ENCODE measurements at regions of chr11 and their contacts with region 1.

Region 1: GRCh38 chr11:9003573-9004309 is at the start of gene NRIP3:
- DNase-seq: peak; percentile 67
- H3K4me3 Mint-ChIP-seq: peak within 1 kb of the TSS; percentile 68
- H3K27ac Mint-ChIP-seq: no peak within 1 kb of the TSS
- H3K4me1 Mint-ChIP-seq: peaks cover 24% of the 10 kb centered on the region
- H3K27me3 Mint-ChIP-seq: peaks cover 33% of the 10 kb centered on the region
- total RNA-seq, gene NRIP3: 3.0 to 3.5 TPM

Region 2: GRCh38 chr11:8682303-8683114 is 321.2 kb before region 1 on chr11 and contains the starts of genes RPL27A and TRIM66:
- CTCF ChIA-PET with region 1: no interaction called
- intact Hi-C with region 1: loop called (anchors 2 kb)
- DNase-seq: peak; percentile 99
- H3K4me3 Mint-ChIP-seq: peak within 1 kb of the TSS; percentile 91
- H3K27ac Mint-ChIP-seq: peak within 1 kb of the TSS; percentile 92
- H3K4me1 Mint-ChIP-seq: peaks cover 42% of the 10 kb centered on the region
- H3K27me3 Mint-ChIP-seq: no peaks in the 10 kb centered on the region
- total RNA-seq, gene RPL27A: 1,157 to 1,188 TPM
- total RNA-seq, gene TRIM66: 16.4 to 19.1 TPM

Region 3: DNA sequence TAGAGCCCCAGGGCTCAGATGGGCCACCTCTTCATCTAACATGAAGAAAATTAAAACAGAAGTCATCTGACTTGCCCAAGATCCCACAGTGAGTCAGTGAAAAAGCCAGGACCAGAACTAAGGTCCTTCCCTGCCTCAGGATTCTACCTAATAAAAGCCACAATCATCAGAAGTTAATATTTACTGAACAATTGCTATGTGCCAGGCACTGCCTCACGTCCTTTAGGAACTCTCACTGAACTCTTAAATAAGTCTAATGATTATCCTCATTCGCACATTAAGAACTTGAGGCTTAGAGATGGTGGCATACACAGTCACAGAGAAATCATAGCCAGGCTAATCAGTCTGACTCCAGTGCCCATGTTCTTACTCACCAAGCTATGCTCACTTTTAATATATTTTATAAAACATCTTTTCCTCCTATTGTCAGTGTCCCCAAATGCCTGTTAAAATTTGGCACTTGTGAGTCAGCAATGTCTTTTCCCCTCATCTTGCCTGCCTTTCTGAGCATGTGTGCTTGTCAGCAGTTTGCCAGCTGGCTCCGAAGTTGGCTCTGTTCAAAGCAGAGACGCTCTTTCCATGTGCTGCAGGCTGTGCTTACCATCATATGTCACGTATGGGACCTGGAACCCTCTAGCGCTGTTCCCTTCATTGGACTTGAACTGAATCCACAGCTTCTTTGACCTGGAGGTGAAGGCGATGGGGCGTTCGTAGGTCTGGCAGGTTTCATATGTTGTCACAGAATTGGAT is 21.5 kb after region 1 on chr11:
- CTCF ChIA-PET with region 1: no interaction called
- intact Hi-C with region 1: no loop called
- DNase-seq: no peak
- H3K4me3 Mint-ChIP-seq: no peak overlapping the region
- H3K27ac Mint-ChIP-seq: no peak overlapping the region
- H3K4me1 Mint-ChIP-seq: no peaks in the 10 kb centered on the region
- H3K27me3 Mint-ChIP-seq: peaks cover 5% of the 10 kb centered on the region

Region 4: GRCh38 chr11:9060700-9061111 is 57.0 kb after region 1 on chr11:
- CTCF ChIA-PET with region 1: no interaction called
- intact Hi-C with region 1: loop called (anchors 1 kb)
- DNase-seq: peak; percentile 89
- H3K4me3 Mint-ChIP-seq: no peak overlapping the region
- H3K27ac Mint-ChIP-seq: no peak overlapping the region
- H3K4me1 Mint-ChIP-seq: peaks cover 12% of the 10 kb centered on the region
- H3K27me3 Mint-ChIP-seq: peaks cover 13% of the 10 kb centered on the region

Region 5: DNA sequence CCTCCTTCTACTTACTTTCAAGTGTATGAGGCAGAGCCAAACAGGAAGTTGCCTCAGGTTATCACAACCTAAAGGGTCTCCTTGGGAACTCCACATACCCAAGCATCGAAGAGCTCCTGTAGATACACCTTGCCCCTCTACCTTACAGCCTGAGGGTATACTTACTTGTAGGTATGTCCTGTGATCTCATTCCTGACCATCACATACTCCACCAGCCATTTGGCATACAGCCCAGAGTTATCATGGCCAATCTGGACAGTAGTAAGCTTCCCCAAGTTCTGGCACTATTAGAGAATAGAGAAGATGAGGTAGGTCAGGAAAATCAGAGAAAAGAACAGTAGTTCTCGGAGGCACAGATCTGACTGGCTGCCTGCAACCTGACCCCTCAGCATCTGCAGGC is 141.1 kb after region 1 on chr11:
- CTCF ChIA-PET with region 1: no interaction called
- intact Hi-C with region 1: no loop called
- DNase-seq: no peak
- H3K4me3 Mint-ChIP-seq: no peak overlapping the region
- H3K27ac Mint-ChIP-seq: peak overlapping the region; percentile 25
- H3K4me1 Mint-ChIP-seq: peaks cover 29% of the 10 kb centered on the region
- H3K27me3 Mint-ChIP-seq: no peaks in the 10 kb centered on the region